CD4-positive, alpha-beta memory T cell (primary cell): ENCODE measurements at regions of chr2 and their contacts with region 1.

Region 1: GRCh38 chr2:84881581-84882414 is 914 bp upstream of the TRABD2A start:
- DNase-seq: peak; percentile 82 to 86 (median 85)
- H3K4me3 ChIP-seq: peak overlapping the region; percentile 67 to 93
- H3K4me3 Mint-ChIP-seq: peak overlapping the region; percentile 90 to 99 (median 96)
- H3K27ac ChIP-seq: peak overlapping the region; percentile 72
- H3K27ac Mint-ChIP-seq: peak overlapping the region; percentile 84 to 98 (median 97)
- H3K4me1 ChIP-seq: peaks cover 32% of the 10 kb centered on the region
- H3K4me1 Mint-ChIP-seq: peaks cover 25 to 60% (median 42%) of the 10 kb centered on the region in 4 donors
- H3K27me3 ChIP-seq: no peaks in the 10 kb centered on the region
- H3K27me3 Mint-ChIP-seq: no peaks in the 10 kb centered on the region

Region 2: GRCh38 chr2:84516234-84516986 is 365.4 kb before region 1 on chr2 and contains the start of gene DNAH6:
- CTCF ChIA-PET with region 1: interaction called, 3 read pairs
- POLR2A ChIA-PET with region 1: interaction called, 10 read pairs
- intact Hi-C with region 1: loop called (anchors 5 kb)
- DNase-seq: peak; percentile 87 to 94 (median 92)
- H3K4me3 ChIP-seq: peak within 1 kb of the TSS; percentile 27 to 62
- H3K4me3 Mint-ChIP-seq: peak within 1 kb of the TSS; percentile 91 to 96 (median 92)
- H3K27ac ChIP-seq: peak within 1 kb of the TSS; percentile 47
- H3K27ac Mint-ChIP-seq: peak within 1 kb of the TSS; percentile 88 to 99 (median 97)
- H3K4me1 ChIP-seq: peaks cover 15% of the 10 kb centered on the region
- H3K4me1 Mint-ChIP-seq: peaks cover 13 to 27% (median 16%) of the 10 kb centered on the region in 4 donors
- H3K27me3 ChIP-seq: no peaks in the 10 kb centered on the region
- H3K27me3 Mint-ChIP-seq: peaks cover 0 to 3% of the 10 kb centered on the region in 2 donors
- total RNA-seq, gene DNAH6: 1.9 to 2.9 TPM

Region 3: DNA sequence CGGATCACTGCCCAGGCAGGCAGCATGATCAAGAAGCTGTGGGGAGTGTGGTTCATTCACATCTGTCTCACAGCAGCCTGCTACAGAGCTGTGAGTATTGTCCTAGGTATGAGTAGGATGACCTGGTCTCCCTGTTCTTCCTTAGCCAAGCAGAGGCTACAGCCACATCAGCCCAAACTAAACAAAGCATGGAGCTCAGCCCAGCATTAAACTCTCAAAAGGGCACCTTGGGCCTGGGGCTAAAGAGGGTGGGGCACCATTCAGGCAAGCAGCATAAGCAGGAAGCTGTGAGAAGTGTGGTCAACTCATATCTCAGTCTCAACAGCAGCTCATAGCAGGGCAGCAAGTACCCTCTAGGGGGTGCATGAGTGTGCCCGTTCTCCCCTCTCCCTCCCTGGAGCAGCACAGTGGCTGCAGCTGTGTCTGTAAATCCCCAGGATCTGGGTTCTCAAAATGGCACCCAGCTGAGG is 140.5 kb before region 1 on chr2:
- CTCF ChIA-PET with region 1: interaction called, 26 read pairs
- POLR2A ChIA-PET with region 1: interaction called, 12 read pairs
- intact Hi-C with region 1: loop called (anchors 1 kb)
- DNase-seq: peak; percentile 47 to 58 (median 51)
- H3K4me3 ChIP-seq: no peak overlapping the region
- H3K4me3 Mint-ChIP-seq: peak overlapping the region in 4 of 8 donors; percentile 12 to 39 (median 28)
- H3K27ac ChIP-seq: no peak overlapping the region
- H3K27ac Mint-ChIP-seq: peak overlapping the region in 6 of 7 donors; percentile 17 to 87 (median 64)
- H3K4me1 ChIP-seq: peaks cover 22% of the 10 kb centered on the region
- H3K4me1 Mint-ChIP-seq: peaks cover 15 to 28% (median 21%) of the 10 kb centered on the region in 4 donors
- H3K27me3 ChIP-seq: no peaks in the 10 kb centered on the region
- H3K27me3 Mint-ChIP-seq: no peaks in the 10 kb centered on the region

Region 4: DNA sequence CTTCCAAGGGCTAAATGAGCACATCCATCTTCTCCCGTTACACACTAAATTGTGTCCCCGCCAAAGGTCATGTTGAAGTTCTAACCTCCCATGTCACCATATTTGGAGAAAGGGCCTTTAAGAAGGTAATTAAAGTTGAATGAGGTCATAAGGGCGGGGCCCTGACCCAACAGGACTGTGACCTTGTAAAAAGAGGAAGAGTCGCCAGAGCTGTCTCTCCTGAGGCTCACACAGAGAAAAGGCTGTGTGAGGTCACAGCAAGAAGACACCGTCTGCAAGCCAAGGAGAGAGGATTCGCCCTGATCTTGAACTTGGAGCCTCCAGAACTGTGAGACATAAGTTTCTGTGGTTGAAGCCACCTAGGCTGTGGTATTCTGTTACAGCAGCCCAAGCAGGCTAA is 25.0 kb before region 1 on chr2:
- CTCF ChIA-PET with region 1: interaction called, 11 read pairs
- POLR2A ChIA-PET with region 1: interaction called, 35 read pairs
- intact Hi-C with region 1: no loop called
- DNase-seq: peak in 3 of 5 donors; percentile 29 to 51 (median 30)
- H3K4me3 ChIP-seq: peak overlapping the region in 1 of 2 donors; percentile 23
- H3K4me3 Mint-ChIP-seq: peak overlapping the region; percentile 40 to 89 (median 77)
- H3K27ac ChIP-seq: peak overlapping the region; percentile 53
- H3K27ac Mint-ChIP-seq: peak overlapping the region; percentile 83 to 97 (median 96)
- H3K4me1 ChIP-seq: peaks cover 98% of the 10 kb centered on the region
- H3K4me1 Mint-ChIP-seq: peaks cover 84 to 97% (median 91%) of the 10 kb centered on the region in 4 donors
- H3K27me3 ChIP-seq: no peaks in the 10 kb centered on the region
- H3K27me3 Mint-ChIP-seq: no peaks in the 10 kb centered on the region

Region 5: DNA sequence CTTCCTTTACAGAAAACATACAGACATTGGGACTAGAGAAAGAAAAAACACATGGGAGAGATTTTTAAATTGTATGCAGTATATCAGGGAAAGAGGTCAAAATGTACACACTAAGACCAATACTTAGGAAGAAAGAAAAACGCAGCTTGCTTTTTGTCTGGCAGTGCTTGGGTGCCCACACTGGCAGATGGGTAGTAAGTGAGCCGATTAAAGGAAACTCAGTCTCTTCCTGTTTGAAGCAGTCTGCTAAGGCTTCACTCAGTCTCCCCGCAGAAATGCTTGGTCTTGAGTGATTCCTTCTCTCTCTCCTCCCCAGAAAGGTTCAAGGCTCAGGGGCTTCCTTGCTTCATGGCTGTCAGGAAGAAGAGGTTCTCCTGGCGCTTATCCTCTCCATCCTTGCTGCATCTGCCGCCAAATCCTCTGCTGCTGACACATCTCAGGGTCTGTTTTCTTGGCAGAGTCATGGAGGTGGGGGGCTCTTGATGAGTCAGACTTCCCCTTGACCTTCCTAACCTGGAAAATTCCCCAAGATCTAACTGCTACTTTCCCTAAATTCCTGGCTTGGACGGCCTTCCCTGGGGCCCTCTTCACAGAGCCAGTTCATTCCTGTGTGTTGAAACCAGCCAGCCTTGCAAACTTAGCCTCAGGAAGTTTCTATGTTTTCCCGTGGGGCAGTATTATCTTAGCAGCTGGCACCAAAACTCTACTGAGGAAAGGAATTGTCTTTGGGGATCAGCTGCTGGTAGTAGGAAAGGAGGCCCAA is 13.1 kb after region 1 on chr2:
- CTCF ChIA-PET with region 1: interaction called, 114 read pairs
- POLR2A ChIA-PET with region 1: interaction called, 40 read pairs
- intact Hi-C with region 1: no loop called
- DNase-seq: peak in 2 of 5 donors; percentile 36 to 42
- H3K4me3 ChIP-seq: peak overlapping the region in 1 of 2 donors; percentile 13
- H3K4me3 Mint-ChIP-seq: peak overlapping the region; percentile 51 to 75 (median 69)
- H3K27ac ChIP-seq: peak overlapping the region; percentile 50
- H3K27ac Mint-ChIP-seq: peak overlapping the region; percentile 38 to 95 (median 91)
- H3K4me1 ChIP-seq: peaks cover 61% of the 10 kb centered on the region
- H3K4me1 Mint-ChIP-seq: peaks cover 39 to 62% (median 48%) of the 10 kb centered on the region in 4 donors
- H3K27me3 ChIP-seq: no peaks in the 10 kb centered on the region
- H3K27me3 Mint-ChIP-seq: no peaks in the 10 kb centered on the region

Region 6: DNA sequence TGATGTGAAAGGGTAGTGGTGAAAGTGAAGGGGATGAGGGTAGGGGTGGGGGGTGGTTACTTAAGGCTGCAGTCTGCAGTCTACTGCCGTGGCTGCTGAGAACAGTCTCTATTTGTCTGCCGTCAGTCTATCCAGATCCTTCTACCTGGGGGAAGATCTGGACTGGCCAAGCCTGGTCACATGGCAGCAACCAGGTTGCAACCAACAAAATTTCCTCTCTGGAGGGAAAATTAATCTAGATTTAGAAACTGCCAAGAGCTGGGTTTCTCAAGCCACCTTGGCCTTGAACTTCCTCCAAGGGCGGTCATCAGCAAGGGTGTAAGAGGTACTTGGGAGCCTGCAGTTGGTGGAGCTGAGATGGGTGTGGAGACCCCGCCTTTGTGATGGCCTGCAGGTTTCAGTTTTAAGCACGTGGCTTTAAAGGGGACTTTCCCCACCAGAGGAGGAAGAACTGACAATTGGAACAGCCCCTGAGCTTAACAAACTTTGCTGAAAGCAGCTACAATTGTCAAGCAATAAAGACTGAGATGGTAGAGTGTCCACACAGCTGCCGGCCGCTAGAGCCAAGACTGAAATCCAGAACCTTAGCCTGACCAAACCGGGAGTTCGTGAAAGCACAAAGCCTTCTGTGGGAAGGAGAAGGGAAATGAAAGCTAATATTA is 57.8 kb after region 1 on chr2:
- CTCF ChIA-PET with region 1: interaction called, 4 read pairs
- POLR2A ChIA-PET with region 1: interaction called, 22 read pairs
- intact Hi-C with region 1: no loop called
- DNase-seq: peak; percentile 79 to 91 (median 83)
- H3K4me3 ChIP-seq: peak overlapping the region; percentile 34 to 45
- H3K4me3 Mint-ChIP-seq: peak overlapping the region; percentile 76 to 89 (median 87)
- H3K27ac ChIP-seq: peak overlapping the region; percentile 82
- H3K27ac Mint-ChIP-seq: peak overlapping the region; percentile 95 to 99 (median 98)
- H3K4me1 ChIP-seq: peaks cover 24% of the 10 kb centered on the region
- H3K4me1 Mint-ChIP-seq: peaks cover 15 to 34% (median 28%) of the 10 kb centered on the region in 4 donors
- H3K27me3 ChIP-seq: no peaks in the 10 kb centered on the region
- H3K27me3 Mint-ChIP-seq: no peaks in the 10 kb centered on the region

Region 7: GRCh38 chr2:85032621-85033020 is 150.8 kb after region 1 on chr2:
- CTCF ChIA-PET with region 1: no interaction called
- POLR2A ChIA-PET with region 1: no interaction called
- intact Hi-C with region 1: no loop called
- DNase-seq: no peak
- H3K4me3 ChIP-seq: no peak overlapping the region
- H3K4me3 Mint-ChIP-seq: no peak overlapping the region
- H3K27ac ChIP-seq: no peak overlapping the region
- H3K27ac Mint-ChIP-seq: peak overlapping the region in 2 of 7 donors; percentile 31 to 35
- H3K4me1 ChIP-seq: no peaks in the 10 kb centered on the region
- H3K4me1 Mint-ChIP-seq: peaks cover 9 to 16% (median 10%) of the 10 kb centered on the region in 4 donors
- H3K27me3 ChIP-seq: no peaks in the 10 kb centered on the region
- H3K27me3 Mint-ChIP-seq: no peaks in the 10 kb centered on the region